PC-9 (cell line): ENCODE measurements at regions of chr4 and their contacts with region 1.

Region 1: DNA sequence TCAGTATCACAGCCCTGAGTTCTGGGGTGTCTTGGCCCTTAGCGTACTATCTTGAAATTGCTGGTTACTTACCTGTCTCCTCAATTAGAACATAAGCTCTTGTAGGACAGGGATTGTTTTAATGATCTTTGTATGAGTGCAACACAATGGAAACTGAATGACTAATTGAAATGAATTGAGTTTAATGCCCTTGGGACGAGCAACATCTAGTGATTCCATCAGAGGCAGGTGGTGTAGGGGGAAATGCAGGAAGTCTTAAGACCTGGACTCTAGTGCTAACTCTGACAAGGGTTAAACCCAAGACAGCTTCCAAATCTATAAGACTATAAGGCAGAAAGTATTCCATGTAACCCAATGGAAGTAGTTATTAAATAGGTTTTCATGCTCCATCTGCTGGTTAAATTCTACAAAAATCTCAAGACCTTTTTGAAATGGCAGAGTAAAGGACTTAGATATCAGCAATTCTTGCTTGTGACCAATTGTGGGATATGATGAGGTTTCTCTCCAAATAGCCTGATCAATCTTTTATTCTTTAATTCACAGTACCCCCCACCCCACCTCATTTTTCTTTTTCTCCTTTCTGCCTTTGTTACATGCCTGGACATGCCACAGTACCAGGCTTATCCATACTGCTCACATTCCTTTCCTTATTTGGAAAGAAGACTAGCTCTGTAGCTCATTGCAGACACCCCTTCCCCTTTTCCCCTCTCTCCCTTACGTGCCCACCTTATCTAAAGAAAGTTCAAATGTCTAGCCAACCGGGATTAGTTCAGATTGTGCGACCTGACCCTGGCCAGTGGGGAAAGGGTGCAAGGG is 340.8 kb downstream of the PAPSS1 start:
- DNase-seq: no peak
- H3K4me3 ChIP-seq: no peak overlapping the region
- H3K27ac ChIP-seq: no peak overlapping the region
- H3K4me1 ChIP-seq: no peaks in the 10 kb centered on the region
- H3K27me3 ChIP-seq: no peaks in the 10 kb centered on the region
- CTCF ChIP-seq: no peak

Region 2: DNA sequence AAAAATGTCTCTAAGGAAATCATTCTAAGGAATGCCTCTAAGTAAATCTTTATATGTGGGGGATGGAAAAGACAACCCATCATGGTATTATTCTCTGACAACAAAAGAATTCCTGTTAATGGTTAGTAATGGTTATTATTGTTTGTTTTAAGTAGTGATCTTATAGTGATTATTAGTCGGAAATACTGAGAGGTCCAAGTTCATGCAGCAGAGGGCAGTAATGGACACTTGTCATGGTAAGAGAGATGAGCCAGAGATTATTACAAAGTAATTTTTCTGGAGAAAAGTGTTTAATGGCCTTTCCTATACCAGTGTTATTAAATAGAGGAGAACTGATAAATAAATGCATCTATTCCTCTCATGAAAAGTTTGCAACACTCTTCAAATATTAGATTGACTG is 335.1 kb before region 1 on chr4:
- CTCF ChIA-PET with region 1: no interaction called
- POLR2A ChIA-PET with region 1: no interaction called
- intact Hi-C with region 1: loop called (anchors 2 kb)
- DNase-seq: no peak
- H3K4me3 ChIP-seq: no peak overlapping the region
- H3K27ac ChIP-seq: no peak overlapping the region
- H3K4me1 ChIP-seq: no peaks in the 10 kb centered on the region
- H3K27me3 ChIP-seq: no peaks in the 10 kb centered on the region
- CTCF ChIP-seq: no peak

Region 3: DNA sequence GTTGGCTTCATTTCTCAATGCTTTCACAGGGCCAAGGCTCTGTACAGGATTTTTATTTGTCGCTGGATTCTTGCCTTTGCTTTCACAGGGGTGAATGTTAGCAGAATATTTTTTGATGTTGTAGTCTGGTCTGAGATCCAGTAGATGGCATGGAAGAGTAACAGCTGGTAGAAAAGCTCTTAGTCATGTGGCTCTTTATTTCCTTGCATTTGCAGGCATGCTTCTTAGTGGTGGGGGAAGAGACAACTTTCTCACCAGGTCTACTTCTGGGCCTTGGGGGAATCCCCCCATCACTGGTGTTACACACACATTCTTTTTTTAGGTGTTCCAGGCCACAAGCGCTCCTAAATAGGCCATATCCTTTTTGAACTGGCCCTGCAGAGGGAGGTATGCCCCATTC is 284.9 kb before region 1 on chr4:
- CTCF ChIA-PET with region 1: no interaction called
- POLR2A ChIA-PET with region 1: no interaction called
- intact Hi-C with region 1: loop called (anchors 2 kb)
- DNase-seq: no peak
- H3K4me3 ChIP-seq: no peak overlapping the region
- H3K27ac ChIP-seq: no peak overlapping the region
- H3K4me1 ChIP-seq: no peaks in the 10 kb centered on the region
- H3K27me3 ChIP-seq: no peaks in the 10 kb centered on the region
- CTCF ChIP-seq: no peak

Region 4: DNA sequence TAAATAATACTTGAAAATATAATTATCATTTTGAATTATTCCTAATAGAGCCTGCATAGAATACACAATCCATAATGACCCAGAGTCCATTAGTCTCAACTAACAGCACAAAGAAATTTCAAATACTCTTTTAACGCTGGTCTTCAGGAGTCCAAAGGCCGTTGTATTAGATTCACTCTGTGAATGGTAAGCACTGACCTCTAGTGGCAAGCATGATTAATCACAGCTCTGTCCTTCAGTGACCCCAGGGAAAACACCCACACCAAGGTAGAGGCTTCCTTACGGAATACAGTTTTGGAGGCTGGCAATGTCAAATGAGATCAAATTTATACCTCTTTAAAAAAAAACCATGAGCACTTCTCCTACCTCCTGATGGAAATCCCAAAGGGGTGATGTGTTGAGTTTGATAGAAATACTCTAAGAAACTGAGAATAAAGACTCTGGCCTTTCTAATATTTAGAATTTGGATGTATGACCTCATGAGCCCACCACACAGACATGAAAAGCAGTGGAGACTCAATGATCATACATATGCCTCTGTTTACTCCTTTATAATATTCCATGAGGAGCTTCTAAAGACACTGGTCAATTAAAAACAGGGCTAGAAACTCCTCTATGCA is 196.0 kb before region 1 on chr4:
- CTCF ChIA-PET with region 1: no interaction called
- POLR2A ChIA-PET with region 1: no interaction called
- intact Hi-C with region 1: loop called (anchors 10 kb)
- DNase-seq: peak in 1 of 2 experiments; percentile 35
- H3K4me3 ChIP-seq: no peak overlapping the region
- H3K27ac ChIP-seq: no peak overlapping the region
- H3K4me1 ChIP-seq: no peaks in the 10 kb centered on the region
- H3K27me3 ChIP-seq: no peaks in the 10 kb centered on the region
- CTCF ChIP-seq: peak; percentile 75

Region 5: DNA sequence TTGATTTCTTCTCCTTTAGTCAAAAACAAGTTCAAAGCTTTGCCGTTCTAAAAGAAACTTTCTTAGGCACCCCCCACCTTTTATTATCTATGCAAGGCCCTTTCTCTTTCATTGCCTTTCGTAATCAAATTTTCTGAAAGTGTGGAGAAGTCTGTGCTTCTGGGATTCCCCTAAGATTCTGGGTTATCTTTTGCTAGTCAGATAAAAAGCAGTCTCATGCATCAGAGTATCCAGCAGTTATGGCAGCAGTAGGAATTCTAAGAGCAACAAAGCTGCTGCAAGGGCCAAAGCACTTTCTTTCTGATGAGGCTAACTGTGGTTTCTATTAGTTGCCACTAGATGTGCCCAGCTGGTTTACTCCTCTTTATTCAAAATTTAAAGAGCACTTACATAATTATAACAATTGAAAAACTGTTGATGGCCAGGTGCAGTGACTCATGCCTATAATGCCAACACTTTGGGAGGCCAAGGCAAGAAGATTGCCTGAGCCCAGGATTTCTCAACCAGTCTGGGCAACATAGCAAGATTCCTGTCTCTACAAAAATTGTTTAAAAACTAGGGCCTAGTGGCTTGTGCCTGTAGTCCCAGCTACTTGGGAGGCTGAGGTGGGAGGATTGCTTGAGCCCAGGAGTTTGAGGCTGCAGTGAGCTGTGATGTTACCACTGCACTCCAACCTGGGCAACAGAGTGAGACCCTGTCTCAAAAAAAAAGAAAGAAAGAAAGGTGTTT is 44.6 kb after region 1 on chr4:
- CTCF ChIA-PET with region 1: no interaction called
- POLR2A ChIA-PET with region 1: no interaction called
- intact Hi-C with region 1: no loop called
- DNase-seq: no peak
- H3K4me3 ChIP-seq: no peak overlapping the region
- H3K27ac ChIP-seq: no peak overlapping the region
- H3K4me1 ChIP-seq: no peaks in the 10 kb centered on the region
- H3K27me3 ChIP-seq: no peaks in the 10 kb centered on the region
- CTCF ChIP-seq: no peak